Activated CD4-positive, alpha-beta T cell treated with anti-CD3 and anti-CD28 coated beads for 36 hours (primary cell): ENCODE measurements at regions of chr20 and their contacts with region 1.

Region 1: GRCh38 chr20:20489054-20489453 is 121.2 kb downstream of the INSM1 start:
- DNase-seq: no peak
- ATAC-seq: peak; percentile 17
- H3K4me3 Mint-ChIP-seq: peak overlapping the region; percentile 67
- H3K27ac Mint-ChIP-seq: peak overlapping the region; percentile 84
- H3K4me1 Mint-ChIP-seq: peaks cover 64% of the 10 kb centered on the region
- H3K27me3 Mint-ChIP-seq: no peaks in the 10 kb centered on the region

Region 2: DNA sequence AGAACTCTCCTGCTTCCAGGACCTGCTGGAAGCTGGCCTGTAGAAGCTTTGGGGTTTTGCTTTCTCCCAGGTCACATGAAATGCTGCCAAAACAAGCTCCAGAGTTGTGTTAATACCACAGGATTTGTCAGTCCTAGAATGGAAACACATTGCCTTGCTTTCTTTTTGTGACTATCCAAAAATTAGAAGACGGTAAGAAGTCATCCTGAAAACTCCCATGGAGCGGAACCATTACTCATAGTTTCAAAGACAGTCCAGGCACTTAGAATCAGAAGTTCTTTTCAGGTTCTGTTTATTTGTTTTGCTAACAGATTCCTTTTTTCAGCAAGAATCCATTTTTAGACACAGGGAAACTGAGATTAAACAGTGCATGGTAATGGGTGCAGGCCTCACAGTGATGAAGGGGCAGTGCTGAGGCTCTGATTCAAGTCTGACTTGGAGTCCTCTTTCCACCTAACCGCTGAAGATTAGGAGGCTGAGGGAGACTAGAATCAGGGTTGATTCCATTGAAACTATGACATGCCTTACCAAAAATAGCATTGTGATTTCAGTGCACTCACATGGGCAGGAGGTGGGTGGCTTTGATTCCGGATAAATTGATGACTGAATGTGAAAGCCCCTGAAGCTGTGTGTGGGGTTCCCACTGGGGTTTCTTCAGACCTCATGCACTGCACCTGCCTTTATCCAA is 544.1 kb before region 1 on chr20:
- CTCF ChIA-PET with region 1: no interaction called
- POLR2A ChIA-PET with region 1: no interaction called
- intact Hi-C with region 1: loop called in 1 of 2 experiments (anchors 1 kb)
- DNase-seq: peak; percentile 60
- ATAC-seq: peak; percentile 86
- H3K4me3 Mint-ChIP-seq: no peak overlapping the region
- H3K27ac Mint-ChIP-seq: no peak overlapping the region
- H3K4me1 Mint-ChIP-seq: peaks cover 20% of the 10 kb centered on the region
- H3K27me3 Mint-ChIP-seq: peaks cover 10% of the 10 kb centered on the region

Region 3: DNA sequence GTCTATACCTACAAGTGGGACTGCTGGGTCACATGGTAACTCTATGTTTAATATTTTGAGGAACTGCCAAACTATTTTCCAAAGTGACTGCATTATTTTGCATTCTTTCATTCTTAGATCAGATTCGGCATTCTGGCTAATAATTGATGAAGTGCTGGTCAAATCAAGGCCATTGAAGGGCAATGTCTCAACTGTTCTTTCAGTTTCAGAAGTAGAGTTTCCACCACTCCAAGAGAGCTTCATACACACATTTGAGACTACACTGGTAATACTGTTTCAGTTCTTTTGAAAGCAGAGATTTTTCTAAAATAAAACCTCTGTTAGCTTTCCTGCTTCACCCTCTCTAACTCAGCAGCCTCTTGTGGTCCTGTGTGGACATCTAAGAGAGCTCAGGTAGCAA is 282.3 kb before region 1 on chr20:
- CTCF ChIA-PET with region 1: no interaction called
- POLR2A ChIA-PET with region 1: no interaction called
- intact Hi-C with region 1: no loop called
- DNase-seq: no peak
- ATAC-seq: no peak
- H3K4me3 Mint-ChIP-seq: no peak overlapping the region
- H3K27ac Mint-ChIP-seq: no peak overlapping the region
- H3K4me1 Mint-ChIP-seq: no peaks in the 10 kb centered on the region
- H3K27me3 Mint-ChIP-seq: peaks cover 5% of the 10 kb centered on the region

Region 4: DNA sequence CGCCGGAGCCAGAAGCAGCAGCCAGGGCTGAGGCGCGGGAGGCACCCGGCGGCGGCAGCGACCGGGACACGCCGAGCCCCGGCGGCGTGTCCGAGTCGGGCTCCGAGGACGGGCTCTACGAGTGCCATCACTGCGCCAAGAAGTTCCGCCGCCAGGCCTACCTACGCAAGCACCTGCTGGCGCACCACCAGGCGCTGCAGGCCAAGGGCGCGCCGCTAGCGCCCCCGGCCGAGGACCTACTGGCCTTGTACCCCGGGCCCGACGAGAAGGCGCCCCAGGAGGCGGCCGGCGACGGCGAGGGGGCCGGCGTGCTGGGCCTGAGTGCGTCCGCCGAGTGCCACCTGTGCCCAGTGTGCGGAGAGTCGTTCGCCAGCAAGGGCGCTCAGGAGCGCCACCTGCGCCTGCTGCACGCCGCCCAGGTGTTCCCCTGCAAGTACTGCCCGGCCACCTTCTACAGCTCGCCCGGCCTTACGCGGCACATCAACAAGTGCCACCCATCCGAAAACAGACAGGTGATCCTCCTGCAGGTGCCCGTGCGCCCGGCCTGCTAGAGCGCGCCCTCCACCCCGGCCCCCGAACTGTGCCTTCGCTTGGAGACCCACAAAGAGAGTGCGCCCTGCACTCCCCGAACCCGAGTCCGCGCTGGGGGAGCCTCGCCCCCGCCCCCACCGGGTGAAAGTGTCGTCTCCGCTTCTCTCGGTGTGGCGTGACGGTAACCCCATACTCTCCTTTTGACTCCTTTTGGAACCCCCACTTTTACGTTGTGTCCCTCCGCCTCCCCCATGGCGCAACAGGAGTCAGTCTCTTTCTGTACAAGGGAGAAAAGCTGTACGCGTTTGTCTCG is 119.6 kb before region 1 on chr20:
- CTCF ChIA-PET with region 1: no interaction called
- POLR2A ChIA-PET with region 1: interaction called, 11 read pairs
- intact Hi-C with region 1: loop called (anchors 2 to 5 kb)
- DNase-seq: peak; percentile 59
- ATAC-seq: peak; percentile 10
- H3K4me3 Mint-ChIP-seq: peak overlapping the region; percentile 77
- H3K27ac Mint-ChIP-seq: peak overlapping the region; percentile 64
- H3K4me1 Mint-ChIP-seq: peaks cover 24% of the 10 kb centered on the region
- H3K27me3 Mint-ChIP-seq: peaks cover 56% of the 10 kb centered on the region

Region 5: DNA sequence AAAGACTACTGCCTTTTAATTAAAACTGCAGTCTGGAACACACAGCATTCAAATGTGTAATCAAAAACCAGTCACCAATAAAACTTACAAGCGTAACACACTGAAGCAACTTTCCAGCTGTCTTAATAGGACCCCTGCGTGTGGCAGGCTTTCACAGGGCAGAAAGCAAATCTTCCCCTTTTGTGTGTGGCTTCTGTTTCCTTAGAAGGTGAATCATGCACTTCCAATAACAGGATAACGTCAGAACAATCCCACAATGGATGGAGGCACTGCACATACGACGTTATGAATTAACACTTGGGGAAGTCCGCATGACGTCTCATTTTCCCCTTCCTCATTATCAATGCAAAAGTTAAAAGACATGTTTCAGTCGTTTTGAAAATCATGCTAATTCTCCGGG is 76.3 kb before region 1 on chr20:
- CTCF ChIA-PET with region 1: interaction called, 4 read pairs
- POLR2A ChIA-PET with region 1: interaction called, 7 read pairs
- intact Hi-C with region 1: loop called (anchors 1 kb)
- DNase-seq: peak; percentile 55
- ATAC-seq: peak; percentile 86
- H3K4me3 Mint-ChIP-seq: peak overlapping the region; percentile 63
- H3K27ac Mint-ChIP-seq: peak overlapping the region; percentile 92
- H3K4me1 Mint-ChIP-seq: peaks cover 60% of the 10 kb centered on the region
- H3K27me3 Mint-ChIP-seq: no peaks in the 10 kb centered on the region

Region 6: DNA sequence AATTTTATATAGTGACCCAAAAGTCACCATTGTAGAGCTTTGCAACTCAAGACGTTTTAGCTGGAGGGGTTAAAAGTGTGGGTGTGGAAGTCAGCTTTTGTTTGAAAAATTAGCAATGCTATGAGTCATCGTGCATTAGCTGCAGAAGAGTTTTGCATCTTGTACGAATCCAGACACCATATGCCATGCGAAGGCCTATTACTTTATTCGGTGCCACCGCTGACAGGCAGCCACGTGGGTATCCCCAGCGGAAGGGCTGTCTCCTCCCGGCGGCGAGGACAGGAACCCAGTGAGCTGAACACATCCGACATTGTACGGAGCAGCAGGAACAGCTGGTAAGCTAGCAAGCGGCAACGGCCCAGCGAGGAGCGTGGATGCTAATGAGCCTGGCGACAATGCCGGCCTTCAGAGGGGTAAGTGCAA is 36.8 kb before region 1 on chr20:
- CTCF ChIA-PET with region 1: interaction called, 3 read pairs
- POLR2A ChIA-PET with region 1: interaction called, 17 read pairs
- intact Hi-C with region 1: loop called (anchors 1 kb)
- DNase-seq: peak; percentile 84
- ATAC-seq: peak; percentile 97
- H3K4me3 Mint-ChIP-seq: peak overlapping the region; percentile 78
- H3K27ac Mint-ChIP-seq: peak overlapping the region; percentile 71
- H3K4me1 Mint-ChIP-seq: peaks cover 46% of the 10 kb centered on the region
- H3K27me3 Mint-ChIP-seq: no peaks in the 10 kb centered on the region

Region 7: GRCh38 chr20:20505554-20505953 is 16.5 kb after region 1 on chr20:
- CTCF ChIA-PET with region 1: no interaction called
- POLR2A ChIA-PET with region 1: interaction called, 4 read pairs
- intact Hi-C with region 1: loop called in 1 of 2 experiments (anchors 2 kb)
- DNase-seq: peak; percentile 20
- ATAC-seq: peak; percentile 76
- H3K4me3 Mint-ChIP-seq: no peak overlapping the region
- H3K27ac Mint-ChIP-seq: no peak overlapping the region
- H3K4me1 Mint-ChIP-seq: peaks cover 22% of the 10 kb centered on the region
- H3K27me3 Mint-ChIP-seq: no peaks in the 10 kb centered on the region